Astrocyte of the cerebellum (primary cell): ENCODE measurements at regions of chr2 and their contacts with region 1.

Region 1: DNA sequence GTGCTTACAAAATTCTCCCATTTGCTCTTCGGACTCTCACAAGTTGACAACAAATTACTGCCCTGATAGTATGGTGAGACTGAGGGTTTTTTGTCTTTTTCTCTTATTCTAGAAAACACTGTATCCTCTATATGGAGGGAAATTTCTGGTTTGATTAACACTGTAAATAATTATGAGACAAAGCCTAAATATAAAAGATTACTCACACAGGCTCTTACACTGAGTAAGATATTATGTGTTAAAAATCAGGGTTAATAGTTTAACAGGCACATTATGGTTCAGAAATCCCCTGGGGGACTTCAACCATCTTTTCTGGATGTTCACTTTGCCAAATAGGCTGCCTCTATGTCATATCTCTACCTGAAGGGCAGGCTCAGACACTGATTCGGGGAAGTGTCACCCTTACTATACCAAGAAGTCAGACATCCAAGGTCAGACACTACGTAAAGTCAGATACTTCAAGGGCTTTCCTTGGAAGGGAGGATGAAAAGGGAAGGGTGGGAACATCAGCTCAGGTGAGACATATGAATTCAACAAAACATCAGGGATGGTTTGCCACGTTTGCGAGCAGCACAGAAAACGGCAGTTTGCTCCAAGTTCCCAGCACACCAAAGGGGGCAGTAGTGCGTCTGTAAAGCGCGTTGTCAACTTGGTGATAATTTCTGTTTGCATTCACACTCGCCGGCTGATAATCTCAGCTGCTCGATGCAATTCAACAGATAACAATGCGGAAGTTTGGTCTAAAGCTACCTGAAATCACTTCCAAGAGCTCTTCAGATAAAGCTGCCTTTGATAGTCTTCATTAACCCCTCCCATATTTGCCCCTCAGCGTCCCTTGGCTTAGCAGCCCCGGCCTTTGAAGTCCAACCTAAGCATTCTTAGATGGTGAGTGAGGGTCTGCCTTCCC is 972 bp upstream of the RASGRP3 start:
- DNase-seq: peak; percentile 77
- H3K4me3 ChIP-seq: peak overlapping the region; percentile 48
- CTCF ChIP-seq: peak; percentile 90

Region 2: DNA sequence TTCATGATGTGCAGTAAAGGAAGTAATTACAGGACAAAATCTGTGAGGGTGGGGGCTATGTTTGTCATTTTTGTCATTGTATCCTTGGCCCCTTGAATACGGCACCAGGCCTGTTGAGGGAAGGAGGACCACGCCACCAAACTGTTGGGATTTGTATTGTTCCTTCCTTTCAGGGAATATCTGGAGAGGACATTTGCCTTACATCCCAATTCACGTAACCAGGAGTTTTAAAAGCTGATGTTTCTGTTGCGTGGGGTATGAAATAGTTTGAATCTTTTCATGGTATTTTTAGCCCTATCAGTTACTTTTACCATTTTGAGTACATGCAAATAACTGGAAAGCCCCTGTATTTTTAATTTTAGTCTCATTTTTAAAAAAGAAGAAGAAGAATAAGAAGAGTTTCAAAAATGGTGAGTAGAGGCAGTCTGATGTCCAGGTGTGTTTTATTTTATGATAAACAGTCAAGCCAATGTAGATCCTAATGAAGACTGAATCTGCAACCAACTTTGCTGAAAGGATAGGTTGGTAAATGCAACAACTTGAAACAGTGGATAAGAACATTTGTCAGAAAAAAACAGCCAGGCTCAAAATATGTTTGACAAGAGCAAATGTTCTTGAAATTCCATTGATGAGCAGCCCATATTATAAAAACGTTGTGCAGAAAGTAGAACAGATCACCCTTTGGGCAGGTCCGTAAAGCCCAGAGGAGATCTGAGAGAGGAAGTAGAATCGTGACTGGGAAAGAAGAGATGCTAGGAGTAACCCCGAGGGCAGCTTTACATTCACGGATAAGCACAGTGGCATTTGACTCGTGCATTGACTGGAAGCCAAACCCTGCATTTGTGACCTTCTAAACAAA is 55.4 kb after region 1 on chr2:
- in situ Hi-C with region 1: no loop called
- DNase-seq: no peak
- H3K4me3 ChIP-seq: no peak overlapping the region
- CTCF ChIP-seq: no peak

Region 3: DNA sequence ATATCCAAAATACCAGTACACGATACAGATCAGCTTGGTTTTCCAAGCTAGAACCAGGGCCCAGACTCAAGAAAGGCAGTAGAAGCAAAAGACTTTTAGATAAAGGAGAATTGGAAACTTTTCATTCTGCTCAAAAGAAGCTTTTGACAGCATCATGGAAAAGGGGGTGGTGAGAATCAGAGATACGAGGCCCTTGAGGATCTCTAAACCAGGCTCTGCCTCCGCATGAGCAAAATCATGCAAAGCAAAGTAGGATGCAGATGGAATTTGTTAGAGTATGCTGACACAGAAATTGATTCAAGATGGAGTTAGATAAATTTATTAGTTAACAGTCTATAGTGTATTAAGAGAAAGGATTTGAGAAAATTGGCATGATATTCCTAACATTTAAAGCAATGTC is 83.9 kb after region 1 on chr2:
- in situ Hi-C with region 1: loop called (anchors 5 kb)
- DNase-seq: no peak
- H3K4me3 ChIP-seq: no peak overlapping the region
- CTCF ChIP-seq: no peak